Psoas muscle (tissue), 8 donors: ENCODE measurements at regions of chrX and their contacts with region 1.

Region 1: DNA sequence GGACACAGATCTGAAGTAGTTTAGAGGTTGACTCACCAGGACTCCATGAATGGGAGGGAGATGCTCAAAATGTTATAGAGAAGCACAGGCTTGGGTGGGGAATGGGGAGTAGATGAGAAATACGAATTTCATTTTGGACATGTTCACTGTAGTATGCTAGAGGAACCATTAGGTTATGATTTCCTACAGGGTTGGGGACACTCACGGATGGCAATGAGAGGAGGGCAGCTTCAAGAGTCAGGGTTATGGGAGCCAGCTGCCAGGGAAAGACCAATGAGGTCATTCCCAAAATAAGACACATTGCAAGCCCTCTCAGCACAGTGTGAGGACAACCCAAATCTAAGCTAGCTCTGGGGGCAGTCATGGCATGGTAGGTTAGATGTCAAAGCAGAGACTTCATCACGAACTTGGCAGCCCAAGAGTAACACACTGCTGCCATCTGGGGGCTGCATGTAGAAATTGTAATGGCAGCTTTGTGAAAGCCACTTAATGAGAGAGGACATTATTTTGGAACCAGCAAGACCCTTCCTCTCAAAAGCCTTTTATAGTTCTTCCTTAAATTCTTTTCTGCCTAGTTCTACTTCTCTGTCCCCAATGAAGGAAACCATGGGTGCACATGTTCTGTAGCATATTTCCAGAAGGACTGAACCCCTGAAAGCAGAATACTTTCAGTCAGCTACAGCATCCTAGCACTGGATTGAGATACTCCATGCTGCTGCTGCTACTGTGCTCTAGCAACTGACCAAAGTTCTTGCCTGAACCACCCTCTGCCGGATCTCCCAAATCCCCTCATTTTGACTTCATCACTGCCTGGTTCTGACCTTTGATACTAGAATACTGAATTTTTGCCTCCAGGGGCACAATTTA is 16.2 kb upstream of the ZCCHC12 start:
- DNase-seq: peak; percentile 30 to 69
- ATAC-seq: peak; percentile 69 to 80 (median 74)
- H3K4me3 ChIP-seq: no peak overlapping the region
- H3K27ac ChIP-seq: no peak overlapping the region
- H3K4me1 ChIP-seq: no peaks in the 10 kb centered on the region
- H3K27me3 ChIP-seq: peaks cover 0 to 5% (median 0%) of the 10 kb centered on the region in 3 donors
- CTCF ChIP-seq: peak; percentile 70

Region 2: GRCh38 chrX:118603981-118604380 is 203.4 kb before region 1 on chrX:
- intact Hi-C with region 1: loop called (anchors 2 to 10 kb)
- DNase-seq: peak in 1 of 2 donors; percentile 16
- ATAC-seq: peak; percentile 74 to 95 (median 88)
- H3K4me3 ChIP-seq: peak overlapping the region; percentile 40
- H3K27ac ChIP-seq: no peak overlapping the region
- H3K4me1 ChIP-seq: no peaks in the 10 kb centered on the region
- H3K27me3 ChIP-seq: no peaks in the 10 kb centered on the region
- CTCF ChIP-seq: peak; percentile 79

Region 3: GRCh38 chrX:118644378-118644777 is 163.0 kb before region 1 on chrX:
- intact Hi-C with region 1: loop called (anchors 2 to 5 kb)
- DNase-seq: no peak
- ATAC-seq: peak in 2 of 4 donors; percentile 72 to 74
- H3K4me3 ChIP-seq: no peak overlapping the region
- H3K27ac ChIP-seq: no peak overlapping the region
- H3K4me1 ChIP-seq: no peaks in the 10 kb centered on the region
- H3K27me3 ChIP-seq: no peaks in the 10 kb centered on the region
- CTCF ChIP-seq: peak; percentile 52